ENCODE measurements at regions of chr18 and their contacts with region 1.

Region 1: GRCh38 chr18:45275367-45276113 is 339.7 kb upstream of the SLC14A2 start:
- DNase-seq: no peak
- H3K4me3 ChIP-seq: no peak overlapping the region
- CTCF ChIP-seq: no peak
- POLR2A ChIP-seq: no peak

Region 2: DNA sequence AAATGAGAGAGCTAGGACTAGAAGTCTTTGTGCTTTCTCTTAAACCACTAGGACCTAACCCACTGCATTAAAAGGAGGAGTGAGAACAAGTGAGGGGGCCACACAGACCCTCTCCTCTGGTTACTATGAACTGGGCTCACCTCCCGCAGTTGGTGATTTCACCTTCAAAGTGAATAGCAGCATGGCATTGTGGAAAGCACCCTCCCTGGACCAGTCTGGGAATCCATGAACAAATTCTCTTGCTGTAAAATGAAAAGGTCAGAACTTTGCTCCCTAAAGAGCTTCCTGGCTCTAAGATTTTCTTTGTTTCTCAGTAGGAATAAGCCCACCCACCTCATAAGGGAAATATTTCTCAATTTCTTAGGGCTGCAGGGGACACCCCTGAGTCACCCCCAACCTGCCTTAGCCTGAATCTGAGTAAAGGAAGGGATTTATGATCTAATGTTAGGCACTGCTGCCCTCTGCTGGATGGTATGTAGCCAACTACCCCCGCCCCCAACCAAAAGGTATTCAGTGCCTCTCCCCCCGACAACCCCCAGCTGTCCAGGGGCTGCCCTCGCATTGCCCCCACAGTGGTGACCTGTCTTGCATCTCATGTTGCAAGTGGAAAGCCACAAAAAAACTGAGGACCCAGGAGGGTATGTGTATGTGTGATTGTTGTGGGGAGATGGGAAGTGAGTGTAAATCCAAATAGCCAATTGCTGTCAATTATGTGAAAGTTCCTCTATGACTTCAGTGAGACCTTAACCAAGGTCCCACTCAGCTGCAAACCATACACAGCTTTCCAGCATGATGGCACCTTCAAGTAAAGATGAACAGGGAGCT is 108.8 kb after region 1 on chr18:
- intact Hi-C with region 1: loop called (anchors 10 kb)
- DNase-seq: peak in 1 of 2 donors; percentile 31
- H3K4me3 ChIP-seq: no peak overlapping the region
- CTCF ChIP-seq: peak in 1 of 3 donors; percentile 22
- POLR2A ChIP-seq: no peak

Measured in lower leg skin (tissue), 4 donors.